Breast epithelium (tissue), 4 donors: ENCODE measurements at regions of chr9 and their contacts with region 1.

Region 1: GRCh38 chr9:78348848-78349247 is 51.9 kb downstream of the PSAT1 start:
- DNase-seq: no peak
- H3K4me3 ChIP-seq: no peak overlapping the region
- H3K27ac ChIP-seq: no peak overlapping the region
- H3K4me1 ChIP-seq: no peaks in the 10 kb centered on the region
- H3K27me3 ChIP-seq: no peaks in the 10 kb centered on the region
- CTCF ChIP-seq: no peak
- POLR2A ChIP-seq: no peak

Region 2: DNA sequence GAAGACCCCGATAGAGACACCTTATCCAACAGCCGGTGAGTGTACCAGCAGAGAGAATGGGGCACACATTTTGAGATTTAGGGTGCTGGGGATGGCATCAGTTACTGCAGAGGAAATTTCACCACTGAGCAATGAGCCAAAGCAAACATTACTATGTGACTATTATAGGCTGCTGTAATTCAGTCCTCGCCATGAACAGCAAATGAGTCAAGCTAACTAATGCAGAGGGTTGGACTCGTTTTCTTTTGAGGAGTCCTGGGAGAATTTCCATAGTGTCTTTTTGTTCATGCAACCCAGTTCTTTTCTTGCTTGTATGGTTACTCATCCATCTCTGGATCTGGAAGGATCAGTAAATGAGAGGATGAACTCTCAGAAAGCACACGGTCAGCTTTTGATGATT is 271.9 kb after region 1 on chr9:
- intact Hi-C with region 1: loop called (anchors 10 kb)
- DNase-seq: no peak
- H3K4me3 ChIP-seq: no peak overlapping the region
- H3K27ac ChIP-seq: no peak overlapping the region
- H3K4me1 ChIP-seq: no peaks in the 10 kb centered on the region
- H3K27me3 ChIP-seq: no peaks in the 10 kb centered on the region
- CTCF ChIP-seq: no peak
- POLR2A ChIP-seq: no peak